ENCODE measurements at regions of chr16 and their contacts with region 1.

Region 1: GRCh38 chr16:88811769-88812512 is at the start of gene APRT:
- DNase-seq: peak; percentile 97
- H3K4me3 Mint-ChIP-seq: peak within 1 kb of the TSS; percentile 90
- H3K27ac Mint-ChIP-seq: peak within 1 kb of the TSS; percentile 99
- H3K4me1 Mint-ChIP-seq: peaks cover 29% of the 10 kb centered on the region
- H3K27me3 Mint-ChIP-seq: no peaks in the 10 kb centered on the region

Region 2: GRCh38 chr16:88770461-88771293 is 41.3 kb before region 1 on chr16:
- CTCF ChIA-PET with region 1: no interaction called
- DNase-seq: no peak
- H3K4me3 Mint-ChIP-seq: no peak overlapping the region
- H3K27ac Mint-ChIP-seq: peak overlapping the region; percentile 69
- H3K4me1 Mint-ChIP-seq: peaks cover 30% of the 10 kb centered on the region
- H3K27me3 Mint-ChIP-seq: no peaks in the 10 kb centered on the region

Region 3: GRCh38 chr16:88856828-88857733 is 45.1 kb after region 1 on chr16 and contains the starts of genes GALNS and TRAPPC2L:
- CTCF ChIA-PET with region 1: interaction called, 14 read pairs
- DNase-seq: peak; percentile 99
- H3K4me3 Mint-ChIP-seq: peak within 1 kb of the TSS; percentile 90
- H3K27ac Mint-ChIP-seq: peak within 1 kb of the TSS; percentile 87
- H3K4me1 Mint-ChIP-seq: peaks cover 34% of the 10 kb centered on the region
- H3K27me3 Mint-ChIP-seq: no peaks in the 10 kb centered on the region

Region 4: GRCh38 chr16:88925101-88925887 is 113.4 kb after region 1 on chr16:
- CTCF ChIA-PET with region 1: no interaction called
- DNase-seq: no peak
- H3K4me3 Mint-ChIP-seq: no peak overlapping the region
- H3K27ac Mint-ChIP-seq: no peak overlapping the region
- H3K4me1 Mint-ChIP-seq: peaks cover 11% of the 10 kb centered on the region
- H3K27me3 Mint-ChIP-seq: no peaks in the 10 kb centered on the region

Measured in activated naive CD4-positive, alpha-beta T cell treated with anti-CD3 and anti-CD28 coated beads, Interleukin-2, amount 10 ng/mL, durations not matched to agents 7 days and 5 days (primary cell).